ENCODE measurements at regions of chr10 and their contacts with region 1.

Region 1: DNA sequence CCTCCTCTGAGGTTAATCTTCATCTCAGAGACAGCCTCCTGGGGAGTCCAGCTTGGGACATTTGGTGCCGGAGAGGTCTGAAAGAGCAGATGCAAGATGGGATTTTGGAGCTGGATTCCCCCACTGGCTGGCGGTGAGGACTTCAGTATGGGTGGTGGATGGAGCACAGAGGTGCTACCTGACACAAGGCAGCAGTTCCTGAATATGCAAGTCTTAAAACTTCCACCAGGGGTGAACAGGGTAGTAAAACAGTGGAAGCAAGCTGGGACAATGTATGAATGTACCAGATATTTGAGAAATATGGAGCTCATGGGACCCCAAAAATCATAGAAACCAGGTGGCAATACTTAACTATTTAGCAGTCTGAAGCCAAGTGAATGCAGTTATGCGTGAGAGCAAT is 4.8 kb upstream of the TAF3 start:
- DNase-seq: no peak

Region 2: GRCh38 chr10:7649673-7650300 is 163.7 kb before region 1 on chr10:
- CTCF ChIA-PET with region 1: no interaction called
- POLR2A ChIA-PET with region 1: no interaction called
- DNase-seq: no peak

Region 3: GRCh38 chr10:7787857-7788638 is 25.4 kb before region 1 on chr10 and contains the starts of genes ATP5F1C and KIN:
- CTCF ChIA-PET with region 1: no interaction called
- POLR2A ChIA-PET with region 1: interaction called, 36 read pairs
- DNase-seq: peak; percentile 98